HAP-1 (cell line): ENCODE measurements at regions of chr12 and their contacts with region 1.

Region 1: DNA sequence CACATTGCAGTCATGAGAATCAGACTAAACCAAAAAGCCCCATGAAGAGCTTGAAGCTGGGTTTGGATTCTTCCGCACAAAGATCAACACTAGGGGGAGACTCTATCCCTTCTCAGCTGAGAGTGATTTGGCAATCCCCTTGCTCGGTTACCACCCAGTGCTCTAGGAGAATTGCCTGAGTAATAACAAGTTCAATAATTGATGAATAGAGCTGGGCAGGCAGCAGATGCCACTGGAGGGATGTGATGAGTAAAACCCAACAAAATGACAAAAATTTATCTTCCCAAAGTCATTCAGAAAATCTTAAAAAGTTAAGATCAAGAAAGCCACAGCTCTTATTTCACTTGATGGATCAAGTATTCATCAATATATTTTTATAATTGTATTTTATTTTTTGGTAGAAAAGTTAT is 185.6 kb upstream of the ARID2 start:
- DNase-seq: peak; percentile 55 to 65
- H3K4me3 ChIP-seq: no peak overlapping the region
- H3K4me1 ChIP-seq: no peaks in the 10 kb centered on the region
- H3K27me3 ChIP-seq: no peaks in the 10 kb centered on the region

Region 2: DNA sequence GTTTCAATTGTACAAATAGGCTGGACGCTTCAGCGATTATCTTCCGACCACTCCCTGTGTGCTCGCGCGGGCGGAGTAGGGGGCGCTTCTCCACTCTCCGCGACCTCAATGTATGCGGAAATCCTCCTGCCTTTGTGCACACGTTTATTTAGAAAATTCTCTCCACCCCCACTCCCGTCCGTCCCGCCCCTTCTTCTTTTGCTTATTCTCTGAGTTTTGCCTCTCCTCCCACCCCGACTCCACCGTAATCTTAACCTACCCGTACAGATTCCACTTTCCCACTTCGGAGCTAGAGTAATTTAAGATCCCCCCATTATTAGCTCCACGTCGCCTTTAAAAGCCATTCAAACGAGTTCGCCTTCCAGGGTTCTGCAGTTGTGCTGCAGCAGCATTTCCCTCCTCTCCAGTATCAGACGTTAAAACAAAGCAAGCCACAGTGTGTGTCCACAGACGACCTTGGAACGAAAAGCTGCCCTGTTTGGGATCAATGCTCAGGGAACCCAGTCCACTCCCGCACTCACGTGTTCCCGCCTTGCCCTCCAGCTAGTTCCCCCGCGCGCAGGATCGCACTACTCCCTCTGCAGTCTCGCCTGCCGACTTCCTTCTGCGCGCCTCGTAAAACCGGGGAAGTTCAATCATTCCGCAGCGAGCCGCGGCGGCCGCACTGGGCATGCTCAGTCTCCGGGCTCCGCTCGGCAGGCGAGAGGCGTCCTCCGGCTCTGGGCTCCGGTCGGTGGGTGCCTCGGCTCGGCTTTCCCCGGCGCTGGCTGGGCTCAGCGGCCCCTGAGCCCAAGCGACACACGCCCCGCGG is 328.3 kb before region 1 on chr12 and contains the start of gene ANO6:
- in situ Hi-C with region 1: no loop called
- DNase-seq: peak; percentile 88 to 92
- H3K4me3 ChIP-seq: peak within 1 kb of the TSS; percentile 78
- H3K4me1 ChIP-seq: peaks cover 22% of the 10 kb centered on the region
- H3K27me3 ChIP-seq: no peaks in the 10 kb centered on the region

Region 3: DNA sequence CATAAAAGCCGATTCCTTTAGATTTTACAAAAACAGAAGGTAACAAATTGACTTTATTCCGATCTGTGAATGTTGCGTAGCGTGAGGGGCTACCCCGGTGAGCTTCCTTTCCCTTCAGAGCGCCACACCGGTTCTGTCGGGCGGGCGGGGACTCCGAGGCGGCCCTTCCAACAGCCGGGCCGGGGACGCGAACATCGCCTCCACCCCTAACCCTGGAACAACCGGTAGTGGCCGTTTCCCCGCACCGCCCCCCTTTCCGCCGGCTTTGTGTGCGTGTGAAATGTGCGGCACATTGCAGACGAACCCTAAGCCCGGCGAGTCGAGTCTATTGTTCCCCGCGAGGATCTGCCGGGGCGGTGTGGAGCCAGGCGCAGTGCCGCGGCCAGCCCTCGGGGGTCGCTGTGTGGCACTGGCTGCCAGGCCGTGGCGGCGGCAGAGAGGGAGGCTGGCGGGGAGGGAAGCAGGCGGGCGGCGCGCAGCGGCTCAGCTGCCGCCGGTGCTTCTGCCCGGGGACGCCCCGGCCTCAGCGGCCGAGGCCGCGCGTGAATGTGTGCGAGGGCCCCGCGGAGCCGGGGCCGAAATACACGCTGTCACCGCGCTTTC is 184.8 kb after region 1 on chr12:
- in situ Hi-C with region 1: loop called (anchors 10 kb)
- DNase-seq: peak; percentile 94 to 98
- H3K4me3 ChIP-seq: peak overlapping the region; percentile 88
- H3K4me1 ChIP-seq: peaks cover 20% of the 10 kb centered on the region; the same call in 1 of the 2 replicates
- H3K27me3 ChIP-seq: no peaks in the 10 kb centered on the region